MCF 10A (cell line): ENCODE measurements at regions of chr16 and their contacts with region 1.

Region 1: DNA sequence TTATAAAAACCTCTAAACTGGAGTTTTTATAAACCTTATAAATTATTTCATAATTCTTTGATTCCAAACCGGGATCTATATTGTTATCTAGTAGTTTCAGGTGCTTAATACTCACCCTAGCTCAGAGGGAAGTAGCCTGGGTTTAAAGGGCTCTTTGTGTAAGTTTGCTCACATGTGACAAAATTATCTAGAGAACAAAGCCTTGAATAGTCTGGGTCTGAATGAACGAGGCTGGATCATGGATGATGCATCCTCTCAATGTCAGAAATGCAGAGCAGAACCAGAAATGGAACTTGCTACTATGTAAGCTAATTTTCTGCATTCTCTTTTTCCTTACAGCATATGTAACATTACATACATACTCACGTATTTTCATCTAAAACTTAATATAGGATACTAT is 103.9 kb upstream of the NETO2 start:
- DNase-seq: no peak
- H3K4me3 Mint-ChIP-seq: no peak overlapping the region
- H3K27ac Mint-ChIP-seq: no peak overlapping the region
- H3K4me1 Mint-ChIP-seq: no peaks in the 10 kb centered on the region
- H3K27me3 Mint-ChIP-seq: no peaks in the 10 kb centered on the region
- CTCF ChIP-seq: no peak

Region 2: DNA sequence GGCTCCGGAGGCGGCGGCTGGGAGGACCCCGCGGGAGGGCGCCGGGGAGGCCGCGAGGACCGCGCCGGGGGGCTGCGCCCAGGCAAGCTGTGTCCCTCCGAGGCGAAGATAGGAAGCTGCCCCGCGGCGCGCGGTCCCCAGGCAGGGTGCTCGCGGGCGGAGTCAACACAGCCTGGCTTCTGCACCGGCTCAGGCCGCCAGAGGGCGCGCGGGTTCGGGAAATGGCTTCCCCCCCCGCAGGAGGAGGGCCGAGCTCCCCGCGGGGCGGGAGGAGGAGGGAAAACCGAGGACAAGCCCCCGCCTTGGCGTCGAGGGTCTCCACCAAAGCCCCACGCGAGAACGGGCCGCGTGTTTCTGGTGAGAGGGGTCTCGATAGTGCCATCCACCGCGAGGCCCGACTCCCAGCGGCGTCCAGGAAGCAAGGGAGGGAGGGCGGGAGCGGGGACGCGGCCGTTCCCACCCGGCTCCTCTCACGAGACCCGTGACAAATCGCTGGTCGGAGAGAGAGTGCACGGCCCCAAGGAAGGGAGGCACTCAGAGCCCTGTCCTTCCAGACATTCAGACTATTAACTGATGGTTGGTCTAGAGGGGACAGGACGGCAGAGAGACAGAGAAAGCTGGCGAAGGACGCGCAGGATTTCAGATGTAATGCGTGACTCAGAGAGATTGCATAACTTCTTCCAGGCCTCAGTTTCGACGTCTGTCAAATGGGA is 209.8 kb before region 1 on chr16:
- CTCF ChIA-PET with region 1: no interaction called
- POLR2A ChIA-PET with region 1: no interaction called
- intact Hi-C with region 1: no loop called
- DNase-seq: peak; percentile 78
- H3K4me3 Mint-ChIP-seq: peak overlapping the region; percentile 73
- H3K27ac Mint-ChIP-seq: no peak overlapping the region
- H3K4me1 Mint-ChIP-seq: peaks cover 5% of the 10 kb centered on the region
- H3K27me3 Mint-ChIP-seq: no peaks in the 10 kb centered on the region
- CTCF ChIP-seq: peak; percentile 89

Region 3: DNA sequence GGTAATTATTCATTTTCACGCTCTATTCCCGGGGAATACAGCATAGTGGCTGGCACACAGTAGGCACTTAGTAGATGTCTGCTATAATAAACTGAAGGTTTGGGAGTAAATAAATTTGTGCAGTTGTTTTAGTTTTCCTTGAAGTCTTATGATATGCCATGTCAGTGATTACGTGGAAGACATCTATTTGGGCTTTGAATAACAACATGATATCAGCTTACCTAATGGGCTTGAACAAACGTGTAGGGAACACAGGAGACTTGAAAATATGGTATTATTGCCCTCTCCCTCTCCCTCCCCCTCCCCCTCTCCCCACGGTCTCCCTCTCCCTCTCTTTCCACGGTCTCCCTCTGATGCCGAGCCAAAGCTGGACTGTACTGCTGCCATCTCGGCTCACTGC is 67.6 kb before region 1 on chr16:
- CTCF ChIA-PET with region 1: no interaction called
- POLR2A ChIA-PET with region 1: no interaction called
- intact Hi-C with region 1: loop called (anchors 10 kb)
- DNase-seq: no peak
- H3K4me3 Mint-ChIP-seq: no peak overlapping the region
- H3K27ac Mint-ChIP-seq: no peak overlapping the region
- H3K4me1 Mint-ChIP-seq: no peaks in the 10 kb centered on the region
- H3K27me3 Mint-ChIP-seq: no peaks in the 10 kb centered on the region
- CTCF ChIP-seq: no peak

Region 4: DNA sequence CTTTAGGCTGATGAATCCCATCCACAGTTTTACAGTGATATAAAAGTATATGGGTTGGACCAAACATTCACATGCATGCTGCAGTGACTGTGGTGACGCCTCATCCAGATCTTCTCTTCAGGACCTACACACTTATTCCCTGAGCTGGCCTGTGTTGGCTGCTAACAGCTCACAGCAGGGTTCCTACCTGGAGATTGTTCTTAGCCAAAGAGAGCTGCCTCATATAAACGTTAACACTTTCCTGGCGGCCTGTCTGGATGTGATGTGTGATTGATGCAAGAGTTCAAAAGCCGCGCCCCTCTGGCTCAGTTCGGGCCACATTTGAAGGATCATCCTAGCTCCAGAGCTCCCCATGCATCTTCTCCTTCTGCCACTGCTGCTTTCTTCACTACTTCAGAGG is 11.0 kb before region 1 on chr16:
- CTCF ChIA-PET with region 1: no interaction called
- POLR2A ChIA-PET with region 1: no interaction called
- intact Hi-C with region 1: no loop called
- DNase-seq: no peak
- H3K4me3 Mint-ChIP-seq: no peak overlapping the region
- H3K27ac Mint-ChIP-seq: no peak overlapping the region
- H3K4me1 Mint-ChIP-seq: no peaks in the 10 kb centered on the region
- H3K27me3 Mint-ChIP-seq: no peaks in the 10 kb centered on the region
- CTCF ChIP-seq: no peak